Posterior vena cava (tissue), 2 donors: ENCODE measurements at regions of chr22 and their contacts with region 1.

Region 1: DNA sequence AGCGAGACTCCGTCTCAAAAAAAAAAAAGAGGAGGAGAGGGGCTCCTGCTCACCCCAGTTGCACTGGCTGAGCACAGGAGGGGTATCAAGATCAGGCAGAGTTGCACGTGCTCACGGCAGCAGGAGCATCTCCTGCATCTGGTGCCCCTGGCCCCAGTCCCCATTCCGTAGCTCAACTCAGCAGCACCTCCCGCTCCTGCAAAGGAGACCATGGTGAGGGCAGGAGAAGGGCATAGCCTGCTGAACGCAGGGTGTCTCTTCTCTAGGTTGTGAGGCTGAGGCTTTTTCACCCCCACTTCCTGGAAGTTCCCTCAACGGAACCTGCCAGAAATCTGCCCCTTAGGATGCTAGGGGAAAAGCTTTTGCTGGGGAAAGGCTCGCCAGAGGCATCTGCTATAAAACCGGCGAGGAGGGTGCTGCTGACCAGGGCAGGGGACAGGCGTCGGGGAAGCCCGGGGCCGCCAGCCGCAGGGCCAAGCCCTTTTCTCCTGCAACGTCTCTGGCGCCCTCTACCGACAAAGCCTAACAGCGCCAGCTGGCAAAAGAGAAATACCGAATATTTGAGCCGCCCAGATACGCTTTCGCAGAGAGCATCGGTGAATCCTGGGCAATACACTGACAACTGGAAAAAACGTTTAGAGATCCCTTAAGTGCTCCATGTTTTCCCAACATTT is 1.0 kb upstream of the PPP6R2 start:
- DNase-seq: peak; percentile 96

Region 2: GRCh38 chr22:50250555-50251476 is 91.3 kb before region 1 on chr22 and contains the start of gene HDAC10:
- intact Hi-C with region 1: loop called in 1 of 2 experiments (anchors 5 kb)
- DNase-seq: peak; percentile 95
- total RNA-seq, gene HDAC10: 14.1 to 23.6 TPM

Region 3: DNA sequence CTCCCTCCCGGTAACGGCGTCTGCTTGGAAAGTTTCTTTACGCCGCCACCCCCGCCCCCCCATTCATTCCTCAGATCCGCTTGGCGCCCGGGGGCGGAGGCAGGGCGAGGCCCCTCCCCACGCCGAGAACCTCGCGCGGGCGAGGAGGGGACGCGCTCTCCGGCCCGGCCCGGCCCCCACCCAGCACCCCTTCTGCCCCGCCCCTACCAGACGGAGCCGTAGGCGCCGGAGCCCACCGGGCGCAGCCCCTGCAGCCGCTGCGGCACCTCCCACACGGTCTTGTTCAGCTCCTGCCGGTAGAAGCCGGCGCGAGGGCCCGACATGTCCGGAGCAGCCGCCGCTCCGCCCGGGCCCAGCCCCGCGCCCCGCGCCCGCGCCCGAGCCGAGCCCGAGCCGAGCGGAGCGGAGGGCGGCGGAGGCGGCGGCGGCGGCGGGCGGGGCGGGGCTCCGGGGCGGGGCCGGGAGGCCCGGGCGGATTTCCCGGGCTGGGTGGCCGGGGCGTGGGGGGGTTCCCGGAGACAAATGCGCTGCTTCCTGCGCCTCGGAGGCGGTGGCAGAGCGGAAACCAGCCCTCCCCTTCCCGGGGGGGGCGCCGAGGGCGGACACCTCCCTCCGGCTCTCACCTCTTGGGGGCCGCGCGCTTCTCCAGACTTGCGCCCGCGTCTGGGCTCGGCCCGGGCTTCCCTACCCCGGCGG is 72.0 kb before region 1 on chr22 and contains the start of gene MAPK11:
- intact Hi-C with region 1: loop called (anchors 2 to 5 kb)
- DNase-seq: no peak
- total RNA-seq, gene MAPK11: 11.5 to 11.6 TPM

Region 4: DNA sequence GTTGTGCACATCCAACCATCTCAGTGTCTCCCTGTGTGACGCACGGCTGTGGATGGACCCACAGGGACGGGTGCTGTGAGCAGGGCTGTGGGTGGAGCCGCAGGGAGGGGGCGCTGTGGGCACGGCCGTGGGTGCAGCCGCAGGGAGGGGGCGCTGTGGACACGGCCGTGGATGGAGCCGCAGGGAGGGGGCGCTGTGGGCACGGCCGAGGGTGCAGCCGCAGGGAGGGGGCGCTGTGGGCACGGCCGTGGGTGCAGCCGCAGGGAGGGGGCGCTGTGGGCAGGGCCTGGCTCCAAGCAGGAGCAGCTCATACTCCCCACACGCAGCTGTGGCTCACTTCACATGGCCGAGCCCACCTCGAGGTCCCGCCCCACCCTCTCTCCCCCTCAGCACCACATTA is 66.0 kb before region 1 on chr22:
- intact Hi-C with region 1: loop called in 1 of 2 experiments (anchors 5 kb)
- DNase-seq: peak; percentile 90

Region 5: DNA sequence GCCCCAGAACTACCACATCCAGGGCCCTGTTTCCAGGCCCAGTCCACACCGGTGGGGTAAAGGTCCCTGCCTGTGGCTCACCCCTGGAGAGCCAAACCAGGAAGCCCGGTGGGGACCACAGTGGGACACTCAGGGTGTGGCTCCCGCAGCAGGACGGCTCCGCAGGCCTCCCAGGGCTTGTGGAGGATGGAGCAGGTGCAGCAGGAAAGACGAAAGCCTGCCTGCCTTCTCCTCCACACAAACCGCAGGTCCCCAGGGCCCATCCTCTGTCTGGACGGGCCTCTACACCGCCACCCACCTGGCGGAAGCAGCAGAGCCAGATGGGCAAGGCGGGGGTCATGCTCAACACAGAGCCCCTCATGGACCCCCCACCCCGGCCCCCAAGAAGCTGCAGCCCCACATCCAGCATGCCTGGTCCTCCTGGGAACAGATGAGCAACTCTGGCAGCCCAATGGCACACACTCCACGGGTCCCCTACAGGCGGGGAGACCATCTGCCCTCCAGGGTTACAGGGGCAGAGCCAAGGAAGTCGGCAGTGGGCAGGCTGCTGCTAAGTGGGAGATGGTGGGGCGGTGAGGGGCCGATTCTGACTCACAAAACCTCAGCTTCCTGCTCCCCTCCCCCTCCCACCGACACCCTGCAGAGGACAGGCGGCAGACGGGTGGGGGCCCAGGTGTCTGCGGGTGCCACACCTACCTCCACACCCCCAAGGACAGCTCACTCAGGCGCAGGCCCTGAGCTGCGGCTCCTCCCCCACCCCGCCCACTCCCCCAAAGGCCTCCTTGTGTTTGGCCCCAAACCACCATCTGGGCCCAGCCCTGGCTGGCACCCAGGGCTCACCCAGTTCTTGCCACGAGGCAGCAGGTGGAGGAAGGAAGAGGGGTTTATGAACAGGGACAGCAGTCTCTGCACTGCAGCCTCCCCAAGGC is 127.5 kb after region 1 on chr22:
- intact Hi-C with region 1: no loop called
- DNase-seq: no peak